Spleen (tissue), 13 donors: ENCODE measurements at regions of chr10 and their contacts with region 1.

Region 1: GRCh38 chr10:42552493-42553407 is 85.6 kb downstream of the ZNF33B start:
- DNase-seq: peak; percentile 98
- H3K4me3 ChIP-seq: peak overlapping the region; percentile 63 to 88 (median 76)
- H3K27ac ChIP-seq: peak overlapping the region; percentile 58 to 89 (median 84)
- H3K4me1 ChIP-seq: peaks cover 13 to 34% (median 25%) of the 10 kb centered on the region in 6 donors
- H3K27me3 ChIP-seq: no peaks in the 10 kb centered on the region
- CTCF ChIP-seq: no peak
- POLR2A ChIP-seq: peak in 2 of 3 donors; percentile 19 to 33

Region 2: GRCh38 chr10:42638055-42638820 is 85.5 kb after region 1 on chr10 and contains the start of gene ZNF33B:
- intact Hi-C with region 1: loop called (anchors 5 kb)
- DNase-seq: peak; percentile 99
- H3K4me3 ChIP-seq: peak within 1 kb of the TSS; percentile 80 to 97 (median 86)
- H3K27ac ChIP-seq: peak within 1 kb of the TSS; percentile 84 to 97 (median 96)
- H3K4me1 ChIP-seq: peaks cover 10 to 50% (median 20%) of the 10 kb centered on the region in 6 donors
- H3K27me3 ChIP-seq: no peaks in the 10 kb centered on the region
- CTCF ChIP-seq: no peak
- POLR2A ChIP-seq: peak in 2 of 3 donors; percentile 3 to 39
- total RNA-seq, gene ZNF33B: 16.7 to 34.1 (median 26.1) TPM